ENCODE measurements at regions of chr5 and their contacts with region 1.

Region 1: GRCh38 chr5:31825518-31826068 is 186.7 kb downstream of the PDZD2 start:
- DNase-seq: peak; percentile 59 to 74 (median 73)
- H3K4me3 ChIP-seq: peak overlapping the region in 2 of 7 experiments; percentile 16 to 55
- H3K27ac ChIP-seq: no peak overlapping the region
- H3K4me1 ChIP-seq: peaks cover 20 to 38% (median 30%) of the 10 kb centered on the region in 4 experiments
- H3K27me3 ChIP-seq: peaks cover 0 to under 1% (median 0%) of the 10 kb centered on the region in 5 experiments

Region 2: DNA sequence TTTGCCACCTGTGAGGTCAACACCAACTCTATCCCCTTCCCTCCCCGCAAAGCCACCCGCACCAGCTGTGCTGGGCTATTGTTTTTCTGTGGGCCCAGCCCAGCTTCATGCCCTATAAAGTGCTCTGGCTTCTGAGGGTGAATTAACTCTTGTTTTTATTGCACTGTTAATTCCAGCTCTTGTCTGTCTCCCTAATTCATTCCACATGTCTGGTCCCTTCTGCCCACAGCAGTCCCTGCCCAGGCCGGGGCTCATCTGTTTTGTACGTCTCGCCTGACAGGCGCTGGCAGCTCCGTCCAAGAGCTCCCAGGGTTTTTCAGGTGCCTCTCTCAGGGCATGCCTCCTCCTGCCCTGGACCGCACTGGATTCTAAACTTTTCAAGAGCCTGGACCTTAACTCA is 67.8 kb before region 1 on chr5:
- CTCF ChIA-PET with region 1: no interaction called
- POLR2A ChIA-PET with region 1: no interaction called
- DNase-seq: no peak
- H3K4me3 ChIP-seq: no peak overlapping the region
- H3K27ac ChIP-seq: no peak overlapping the region
- H3K4me1 ChIP-seq: no peaks in the 10 kb centered on the region
- H3K27me3 ChIP-seq: no peaks in the 10 kb centered on the region

Region 3: DNA sequence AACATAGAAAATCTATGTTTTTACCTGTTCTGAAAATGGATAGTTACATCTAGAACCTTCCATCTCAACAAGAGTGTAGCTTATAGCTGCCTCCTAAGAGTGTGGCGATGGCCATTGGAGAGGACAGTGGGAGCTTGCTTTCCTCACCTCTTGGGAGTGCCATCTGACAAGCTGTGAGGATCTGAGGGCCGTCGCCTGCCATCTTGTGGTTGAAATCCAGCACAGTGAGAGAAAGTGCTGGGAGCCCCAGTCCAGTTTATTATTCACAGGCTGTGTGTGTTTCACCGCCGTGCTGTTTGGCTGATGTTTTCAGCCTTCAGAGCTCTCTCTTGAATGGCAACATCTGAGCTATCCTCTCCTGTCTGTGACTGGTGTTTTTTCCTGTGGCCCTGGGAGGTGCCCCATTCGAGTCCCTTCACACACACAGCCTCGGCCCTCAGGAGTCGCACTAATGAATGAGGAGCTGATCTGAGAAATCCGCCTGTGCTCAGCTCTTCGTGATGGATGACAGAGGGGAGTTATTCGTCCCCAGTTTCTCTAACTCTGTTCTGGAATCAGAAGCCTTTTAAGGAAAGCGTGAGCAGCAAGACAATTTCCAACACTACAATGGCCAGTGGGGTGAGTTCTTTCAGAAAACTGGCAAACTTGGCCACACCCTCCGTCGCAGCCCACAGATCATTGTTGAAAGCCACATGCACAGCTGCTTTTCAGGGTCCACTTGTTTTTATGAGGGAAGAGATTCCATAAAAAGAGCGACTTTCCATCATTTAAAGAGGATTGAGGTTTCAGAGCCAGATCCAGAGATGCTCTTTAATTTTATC is 16.3 kb before region 1 on chr5:
- CTCF ChIA-PET with region 1: interaction called, 10 read pairs
- POLR2A ChIA-PET with region 1: no interaction called
- DNase-seq: peak; percentile 67 to 78 (median 76)
- H3K4me3 ChIP-seq: no peak overlapping the region
- H3K27ac ChIP-seq: no peak overlapping the region
- H3K4me1 ChIP-seq: peaks cover 0 to 6% (median 1%) of the 10 kb centered on the region in 4 experiments
- H3K27me3 ChIP-seq: no peaks in the 10 kb centered on the region

Region 4: GRCh38 chr5:31844615-31845353 is 19.2 kb after region 1 on chr5:
- CTCF ChIA-PET with region 1: interaction called, 11 read pairs
- POLR2A ChIA-PET with region 1: interaction called, 4 read pairs
- DNase-seq: peak in 1 of 3 donors; percentile 16
- H3K4me3 ChIP-seq: peak overlapping the region in 1 of 7 experiments; percentile 8
- H3K27ac ChIP-seq: no peak overlapping the region
- H3K4me1 ChIP-seq: peaks cover 4 to 44% (median 16%) of the 10 kb centered on the region in 4 experiments
- H3K27me3 ChIP-seq: no peaks in the 10 kb centered on the region

Region 5: DNA sequence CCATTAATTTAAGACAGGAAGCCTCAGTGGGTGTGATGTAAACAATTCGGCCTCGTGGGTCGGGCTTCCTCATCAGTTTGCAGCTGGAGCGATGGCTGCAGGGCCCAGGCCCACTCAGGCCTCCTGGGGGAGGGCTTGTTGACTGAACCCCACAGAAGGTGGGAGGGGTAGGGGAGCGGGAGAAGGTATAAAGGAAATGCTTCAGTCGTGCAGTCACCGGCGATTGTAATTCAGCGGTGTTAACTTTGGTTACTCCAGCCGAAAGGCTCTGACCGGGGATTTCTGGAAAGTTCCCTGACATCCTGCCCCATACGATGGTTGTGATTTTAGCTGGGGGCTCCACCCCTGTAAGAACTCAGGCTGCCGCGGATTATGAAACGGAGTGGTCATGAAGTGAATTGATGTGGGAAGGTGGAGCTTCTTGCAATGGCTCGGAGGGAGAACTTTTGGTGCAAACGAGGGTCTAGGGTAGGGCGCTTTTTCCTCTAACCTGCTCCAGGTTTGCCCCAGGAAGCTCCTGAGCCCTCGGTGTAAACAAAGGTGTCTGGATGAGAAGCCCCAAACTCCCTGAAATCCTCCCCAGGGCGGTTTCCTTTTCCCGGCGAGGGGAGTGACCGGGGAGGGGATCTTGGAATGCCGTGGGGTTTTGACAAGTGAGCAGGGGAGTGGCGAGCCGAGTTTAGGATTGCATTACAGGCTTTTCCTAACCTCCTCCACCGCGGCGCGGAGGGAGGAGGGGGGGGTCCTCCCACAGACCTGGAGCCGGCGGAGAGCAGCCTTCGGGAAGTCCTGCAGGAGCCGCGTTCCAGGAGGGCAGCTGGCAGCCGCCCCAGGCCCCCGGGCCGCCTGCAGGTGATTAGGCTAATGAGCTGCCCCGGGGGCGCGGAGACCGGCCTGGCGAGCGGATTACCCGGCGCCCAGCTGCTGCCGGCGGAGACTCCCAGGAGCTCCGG is 28.9 kb after region 1 on chr5:
- CTCF ChIA-PET with region 1: interaction called, 25 read pairs
- POLR2A ChIA-PET with region 1: interaction called, 3 read pairs
- DNase-seq: peak; percentile 42 to 79 (median 64)
- H3K4me3 ChIP-seq: peak overlapping the region; percentile 50 to 94 (median 81)
- H3K27ac ChIP-seq: peak overlapping the region; percentile 47 to 71
- H3K4me1 ChIP-seq: peaks cover 14 to 49% (median 32%) of the 10 kb centered on the region in 4 experiments
- H3K27me3 ChIP-seq: peaks cover 0 to 13% (median 0%) of the 10 kb centered on the region in 5 experiments

Region 6: DNA sequence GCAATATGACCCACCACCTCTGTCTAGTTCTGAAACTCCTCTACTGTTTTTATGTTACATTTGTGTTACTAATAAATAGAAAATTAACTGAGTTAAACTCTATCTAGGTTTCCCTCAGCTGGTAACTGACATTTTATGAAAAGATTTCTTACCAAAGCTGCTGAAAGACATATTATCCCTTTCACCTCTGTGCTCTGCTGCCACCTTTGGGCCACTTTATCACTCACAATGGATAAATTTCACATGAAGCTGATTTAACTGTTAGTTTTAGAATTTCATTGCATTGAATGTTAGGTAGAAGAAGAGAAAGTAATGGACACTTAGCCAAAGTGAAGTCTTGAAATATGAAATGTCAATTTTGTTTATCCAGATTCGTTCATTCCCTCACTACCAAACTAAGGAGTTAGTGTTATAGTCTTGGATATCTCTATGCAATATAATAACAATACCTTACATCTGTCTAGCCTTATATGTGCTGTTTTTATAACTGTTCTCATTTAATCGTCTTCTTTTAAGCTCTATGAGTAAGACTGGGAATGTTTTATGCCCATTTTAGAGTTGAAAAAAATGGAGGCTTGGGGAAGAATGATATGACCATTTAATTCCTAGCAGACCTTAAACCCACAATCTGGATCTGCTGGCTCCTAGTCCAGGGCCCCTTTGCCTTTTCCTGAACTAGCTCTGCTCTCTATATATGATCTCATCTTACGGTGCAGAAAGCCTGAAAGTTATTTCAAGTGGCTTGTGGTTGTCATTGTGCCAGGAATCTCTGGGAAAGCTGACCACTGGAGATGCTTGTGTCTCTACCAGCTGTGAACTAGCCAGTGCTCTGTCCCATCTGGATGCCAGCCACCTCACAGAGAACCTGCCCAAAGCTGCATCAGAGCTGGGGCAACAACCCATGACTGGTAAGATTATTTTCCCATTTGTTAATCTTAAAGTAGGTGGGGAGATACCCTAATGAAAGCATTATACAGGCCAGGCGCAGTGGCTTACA is 251.4 kb after region 1 on chr5:
- CTCF ChIA-PET with region 1: interaction called, 31 read pairs
- POLR2A ChIA-PET with region 1: no interaction called
- DNase-seq: peak; percentile 57 to 80 (median 69)
- H3K4me3 ChIP-seq: no peak overlapping the region
- H3K27ac ChIP-seq: no peak overlapping the region
- H3K4me1 ChIP-seq: no peaks in the 10 kb centered on the region
- H3K27me3 ChIP-seq: no peaks in the 10 kb centered on the region